CD4-positive, alpha-beta memory T cell (primary cell): ENCODE measurements at regions of chr14 and their contacts with region 1.

Region 1: GRCh38 chr14:100067971-100068959 is 3.0 kb downstream of the EVL start:
- DNase-seq: peak; percentile 90 to 99 (median 94)
- H3K4me3 ChIP-seq: peak overlapping the region; percentile 73 to 100
- H3K4me3 Mint-ChIP-seq: peak overlapping the region; percentile 92 to 100 (median 97)
- H3K27ac ChIP-seq: peak overlapping the region; percentile 81
- H3K27ac Mint-ChIP-seq: peak overlapping the region; percentile 95 to 100 (median 100)
- H3K4me1 ChIP-seq: peaks cover 69% of the 10 kb centered on the region
- H3K4me1 Mint-ChIP-seq: peaks cover 43 to 95% (median 60%) of the 10 kb centered on the region in 4 donors
- H3K27me3 ChIP-seq: no peaks in the 10 kb centered on the region
- H3K27me3 Mint-ChIP-seq: no peaks in the 10 kb centered on the region

Region 2: GRCh38 chr14:99480917-99481744 is 587.1 kb before region 1 on chr14 and contains the start of gene CCNK:
- CTCF ChIA-PET with region 1: no interaction called
- POLR2A ChIA-PET with region 1: no interaction called
- intact Hi-C with region 1: loop called (anchors 5 kb)
- DNase-seq: peak; percentile 100
- H3K4me3 ChIP-seq: peak within 1 kb of the TSS; percentile 88 to 97
- H3K4me3 Mint-ChIP-seq: peak within 1 kb of the TSS; percentile 94 to 99 (median 98)
- H3K27ac ChIP-seq: peak within 1 kb of the TSS; percentile 98
- H3K27ac Mint-ChIP-seq: peak within 1 kb of the TSS; percentile 98 to 99 (median 99)
- H3K4me1 ChIP-seq: peaks cover 68% of the 10 kb centered on the region
- H3K4me1 Mint-ChIP-seq: peaks cover 39 to 80% (median 60%) of the 10 kb centered on the region in 4 donors
- H3K27me3 ChIP-seq: no peaks in the 10 kb centered on the region
- H3K27me3 Mint-ChIP-seq: no peaks in the 10 kb centered on the region
- total RNA-seq, gene CCNK: 77.1 to 83.4 TPM

Region 3: GRCh38 chr14:99838639-99839303 is 229.5 kb before region 1 on chr14:
- CTCF ChIA-PET with region 1: no interaction called
- POLR2A ChIA-PET with region 1: no interaction called
- intact Hi-C with region 1: no loop called
- DNase-seq: no peak
- H3K4me3 ChIP-seq: no peak overlapping the region
- H3K4me3 Mint-ChIP-seq: no peak overlapping the region
- H3K27ac ChIP-seq: no peak overlapping the region
- H3K27ac Mint-ChIP-seq: no peak overlapping the region
- H3K4me1 ChIP-seq: no peaks in the 10 kb centered on the region
- H3K4me1 Mint-ChIP-seq: no peaks in the 10 kb centered on the region
- H3K27me3 ChIP-seq: peaks cover 10% of the 10 kb centered on the region
- H3K27me3 Mint-ChIP-seq: peaks cover 27 to 43% of the 10 kb centered on the region in 2 donors

Region 4: GRCh38 chr14:100056964-100057795 is 11.1 kb before region 1 on chr14:
- CTCF ChIA-PET with region 1: interaction called, 1,350 read pairs
- POLR2A ChIA-PET with region 1: interaction called, 1,011 read pairs
- intact Hi-C with region 1: loop called (anchors 1 kb)
- DNase-seq: peak; percentile 61 to 71 (median 66)
- H3K4me3 ChIP-seq: no peak overlapping the region
- H3K4me3 Mint-ChIP-seq: peak overlapping the region; percentile 20 to 80 (median 40)
- H3K27ac ChIP-seq: peak overlapping the region; percentile 3
- H3K27ac Mint-ChIP-seq: peak overlapping the region; percentile 80 to 95 (median 92)
- H3K4me1 ChIP-seq: peaks cover 56% of the 10 kb centered on the region
- H3K4me1 Mint-ChIP-seq: peaks cover 37 to 58% (median 46%) of the 10 kb centered on the region in 4 donors
- H3K27me3 ChIP-seq: no peaks in the 10 kb centered on the region
- H3K27me3 Mint-ChIP-seq: no peaks in the 10 kb centered on the region

Region 5: GRCh38 chr14:100108042-100108825 is 40.0 kb after region 1 on chr14:
- CTCF ChIA-PET with region 1: interaction called, 1,350 read pairs
- POLR2A ChIA-PET with region 1: interaction called, 941 read pairs
- intact Hi-C with region 1: loop called (anchors 1 kb)
- DNase-seq: peak; percentile 78 to 87 (median 83)
- H3K4me3 ChIP-seq: no peak overlapping the region
- H3K4me3 Mint-ChIP-seq: peak overlapping the region; percentile 24 to 79 (median 60)
- H3K27ac ChIP-seq: peak overlapping the region; percentile 67
- H3K27ac Mint-ChIP-seq: peak overlapping the region; percentile 95 to 98 (median 96)
- H3K4me1 ChIP-seq: peaks cover 75% of the 10 kb centered on the region
- H3K4me1 Mint-ChIP-seq: peaks cover 64 to 83% (median 71%) of the 10 kb centered on the region in 4 donors
- H3K27me3 ChIP-seq: no peaks in the 10 kb centered on the region
- H3K27me3 Mint-ChIP-seq: no peaks in the 10 kb centered on the region

Region 6: GRCh38 chr14:100221533-100222223 is 153.4 kb after region 1 on chr14:
- CTCF ChIA-PET with region 1: interaction called, 3 read pairs
- POLR2A ChIA-PET with region 1: interaction called, 39 read pairs
- intact Hi-C with region 1: no loop called
- DNase-seq: peak; percentile 67 to 81 (median 76)
- H3K4me3 ChIP-seq: peak overlapping the region; percentile 82 to 92
- H3K4me3 Mint-ChIP-seq: no peak overlapping the region
- H3K27ac ChIP-seq: peak overlapping the region; percentile 76
- H3K27ac Mint-ChIP-seq: no peak overlapping the region
- H3K4me1 ChIP-seq: peaks cover 43% of the 10 kb centered on the region
- H3K4me1 Mint-ChIP-seq: peaks cover 7 to 29% (median 18%) of the 10 kb centered on the region in 4 donors
- H3K27me3 ChIP-seq: no peaks in the 10 kb centered on the region
- H3K27me3 Mint-ChIP-seq: no peaks in the 10 kb centered on the region

Region 7: DNA sequence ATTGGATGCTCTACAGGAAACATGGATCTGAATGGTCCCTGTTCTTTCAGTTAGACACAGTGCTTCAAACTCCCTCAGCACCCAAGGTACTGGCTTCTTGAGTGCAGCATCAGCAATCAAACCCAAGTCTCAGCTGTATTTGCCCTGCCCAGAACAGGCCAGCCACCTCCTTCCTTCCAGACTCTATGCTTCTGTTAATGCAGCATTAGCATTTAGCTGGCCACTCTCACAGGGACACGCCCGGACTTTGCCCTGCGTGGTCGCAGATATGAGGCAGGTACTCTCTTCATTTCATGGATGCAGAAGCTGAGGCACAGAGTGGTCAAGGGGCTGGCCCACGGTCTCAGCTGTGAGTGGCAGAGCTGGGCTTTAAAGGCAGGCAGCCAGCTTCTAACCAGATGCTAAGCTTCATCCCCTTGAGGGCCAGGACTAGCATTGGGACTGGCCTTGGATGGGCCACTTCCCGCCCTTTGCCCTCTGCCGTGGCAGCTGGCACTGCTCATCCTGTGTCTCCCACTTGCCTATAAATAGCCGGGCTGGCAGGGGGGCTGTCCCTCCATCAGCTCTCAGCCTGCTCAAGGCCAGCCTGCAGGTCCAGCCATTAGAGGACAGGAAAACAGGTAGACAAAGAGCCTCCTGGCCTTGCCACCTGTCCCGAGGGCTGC is 253.3 kb after region 1 on chr14:
- CTCF ChIA-PET with region 1: no interaction called
- POLR2A ChIA-PET with region 1: no interaction called
- intact Hi-C with region 1: no loop called
- DNase-seq: no peak
- H3K4me3 ChIP-seq: no peak overlapping the region
- H3K4me3 Mint-ChIP-seq: no peak overlapping the region
- H3K27ac ChIP-seq: no peak overlapping the region
- H3K27ac Mint-ChIP-seq: no peak overlapping the region
- H3K4me1 ChIP-seq: peaks cover 4% of the 10 kb centered on the region
- H3K4me1 Mint-ChIP-seq: peaks cover 0 to 5% (median 3%) of the 10 kb centered on the region in 4 donors
- H3K27me3 ChIP-seq: no peaks in the 10 kb centered on the region
- H3K27me3 Mint-ChIP-seq: no peaks in the 10 kb centered on the region

Region 8: DNA sequence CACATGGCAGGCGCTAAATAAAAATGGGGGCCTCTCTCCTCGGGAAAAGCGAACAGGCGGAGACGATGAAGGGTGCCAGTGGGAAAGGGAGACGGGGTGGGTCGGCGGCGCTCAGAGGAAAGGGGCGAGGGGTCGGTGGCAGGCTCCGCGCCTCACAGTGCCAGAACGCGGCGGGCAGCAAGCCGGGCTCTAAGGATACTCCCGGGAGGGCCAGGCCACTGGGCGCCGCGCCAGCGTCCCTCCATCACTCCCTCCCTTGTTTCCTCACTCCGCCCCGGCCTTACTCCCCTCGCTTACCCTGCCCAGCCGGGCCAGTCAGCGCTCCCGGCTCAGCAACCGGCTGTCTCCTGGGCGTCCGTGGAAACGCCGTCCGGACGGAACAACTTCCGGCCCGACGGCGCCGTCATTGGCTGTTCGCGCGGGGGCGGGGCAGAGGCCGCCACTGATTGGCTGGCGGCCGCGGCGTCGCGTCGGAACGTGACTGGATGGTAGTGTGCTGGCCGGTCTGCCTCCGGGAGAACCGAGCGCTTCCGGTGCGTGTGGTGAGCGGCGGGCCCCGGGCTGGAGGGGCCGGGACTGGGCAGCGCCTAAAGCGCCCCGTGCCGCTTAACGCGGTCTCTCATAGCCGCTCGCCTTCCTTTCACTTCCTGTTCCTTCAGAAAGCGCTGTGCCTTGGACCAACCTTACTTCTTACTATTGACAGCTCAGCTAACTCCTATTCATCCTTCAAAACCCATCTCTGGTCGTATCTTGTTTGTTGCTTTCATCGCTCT is 307.9 kb after region 1 on chr14:
- CTCF ChIA-PET with region 1: no interaction called
- POLR2A ChIA-PET with region 1: no interaction called
- intact Hi-C with region 1: loop called (anchors 5 kb)
- DNase-seq: peak; percentile 88 to 93 (median 90)
- H3K4me3 ChIP-seq: peak within 1 kb of the TSS; percentile 83 to 92
- H3K4me3 Mint-ChIP-seq: peak within 1 kb of the TSS; percentile 92 to 97 (median 94)
- H3K27ac ChIP-seq: peak within 1 kb of the TSS; percentile 79
- H3K27ac Mint-ChIP-seq: peak within 1 kb of the TSS; percentile 90 to 96 (median 94)
- H3K4me1 ChIP-seq: peaks cover 28% of the 10 kb centered on the region
- H3K4me1 Mint-ChIP-seq: peaks cover 23 to 53% (median 32%) of the 10 kb centered on the region in 4 donors
- H3K27me3 ChIP-seq: no peaks in the 10 kb centered on the region
- H3K27me3 Mint-ChIP-seq: no peaks in the 10 kb centered on the region